ENCODE measurements at regions of chrX and their contacts with region 1.

Region 1: GRCh38 chrX:45849253-45849862 is 648.7 kb upstream of the DIPK2B start:
- DNase-seq: no peak
- H3K4me3 Mint-ChIP-seq: peak overlapping the region; percentile 94
- H3K27ac Mint-ChIP-seq: peak overlapping the region; percentile 94
- H3K4me1 Mint-ChIP-seq: peaks cover 34% of the 10 kb centered on the region
- H3K27me3 Mint-ChIP-seq: no peaks in the 10 kb centered on the region

Region 2: GRCh38 chrX:45515262-45516215 is 333.8 kb before region 1 on chrX:
- intact Hi-C with region 1: loop called (anchors 1 kb)
- DNase-seq: peak; percentile 1
- H3K4me3 Mint-ChIP-seq: no peak overlapping the region
- H3K27ac Mint-ChIP-seq: peak overlapping the region; percentile 65
- H3K4me1 Mint-ChIP-seq: peaks cover 25% of the 10 kb centered on the region
- H3K27me3 Mint-ChIP-seq: no peaks in the 10 kb centered on the region

Region 3: DNA sequence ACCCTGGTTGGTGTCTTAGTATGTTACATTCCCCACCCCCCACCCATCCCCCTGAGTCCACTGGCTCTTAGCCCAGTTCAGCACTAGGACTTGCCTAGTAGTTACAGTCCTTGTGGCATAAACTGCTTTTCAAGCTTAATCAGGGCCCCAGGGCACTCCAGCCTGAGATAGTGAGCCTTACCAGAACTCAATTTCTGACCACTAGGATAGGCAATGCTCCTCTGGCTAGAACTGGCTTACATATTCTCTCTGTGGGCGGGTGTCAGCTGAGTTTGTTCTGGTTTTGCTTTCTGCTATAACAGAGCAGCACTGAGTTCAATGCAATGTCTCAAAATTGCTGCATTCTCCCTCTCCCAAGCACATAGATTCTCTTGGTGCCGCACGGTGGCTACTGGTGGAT is 257.3 kb before region 1 on chrX:
- intact Hi-C with region 1: no loop called
- DNase-seq: no peak
- H3K4me3 Mint-ChIP-seq: no peak overlapping the region
- H3K27ac Mint-ChIP-seq: no peak overlapping the region
- H3K4me1 Mint-ChIP-seq: no peaks in the 10 kb centered on the region
- H3K27me3 Mint-ChIP-seq: peaks cover 2% of the 10 kb centered on the region

Region 4: GRCh38 chrX:45710081-45710801 is 139.1 kb before region 1 on chrX:
- intact Hi-C with region 1: loop called (anchors 2 kb)
- DNase-seq: peak; percentile 16
- H3K4me3 Mint-ChIP-seq: peak overlapping the region; percentile 11
- H3K27ac Mint-ChIP-seq: peak overlapping the region; percentile 90
- H3K4me1 Mint-ChIP-seq: peaks cover 45% of the 10 kb centered on the region
- H3K27me3 Mint-ChIP-seq: no peaks in the 10 kb centered on the region

Region 5: GRCh38 chrX:45806410-45807121 is 42.8 kb before region 1 on chrX:
- intact Hi-C with region 1: loop called (anchors 1 kb)
- DNase-seq: peak; percentile 41
- H3K4me3 Mint-ChIP-seq: peak overlapping the region; percentile 66
- H3K27ac Mint-ChIP-seq: peak overlapping the region; percentile 96
- H3K4me1 Mint-ChIP-seq: peaks cover 93% of the 10 kb centered on the region
- H3K27me3 Mint-ChIP-seq: peaks cover 3% of the 10 kb centered on the region

Region 6: GRCh38 chrX:45912316-45912715 is 63.0 kb after region 1 on chrX:
- intact Hi-C with region 1: no loop called
- DNase-seq: no peak
- H3K4me3 Mint-ChIP-seq: no peak overlapping the region
- H3K27ac Mint-ChIP-seq: no peak overlapping the region
- H3K4me1 Mint-ChIP-seq: no peaks in the 10 kb centered on the region
- H3K27me3 Mint-ChIP-seq: no peaks in the 10 kb centered on the region

Region 7: DNA sequence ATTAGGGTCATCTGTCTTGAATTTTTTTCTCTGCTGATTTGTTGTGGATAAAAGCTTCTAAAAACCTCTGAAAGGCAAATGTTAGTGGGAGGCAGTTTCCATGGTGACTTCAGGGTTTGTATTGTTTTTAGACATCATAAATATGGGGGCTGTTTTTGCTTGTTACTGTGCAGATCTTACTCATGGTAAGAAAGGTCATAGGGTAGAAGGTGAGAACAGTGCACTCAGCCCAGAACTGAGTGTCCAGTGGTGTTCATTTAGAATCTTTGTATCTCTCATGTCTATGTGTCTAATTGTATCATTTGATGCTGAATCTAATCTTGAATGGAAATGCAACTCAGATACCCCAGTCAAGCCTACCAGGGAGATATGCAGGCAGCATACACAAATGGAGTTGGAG is 86.0 kb after region 1 on chrX:
- intact Hi-C with region 1: loop called (anchors 2 kb)
- DNase-seq: no peak
- H3K4me3 Mint-ChIP-seq: no peak overlapping the region
- H3K27ac Mint-ChIP-seq: peak overlapping the region; percentile 82
- H3K4me1 Mint-ChIP-seq: peaks cover 6% of the 10 kb centered on the region
- H3K27me3 Mint-ChIP-seq: no peaks in the 10 kb centered on the region

Measured in activated T-helper 1 cell treated with anti-CD3 and anti-CD28 coated beads, Interleukin-12 subunit alpha, Interleukin-12 subunit beta, Interleukin-2, Interleukin-4 antibody, amounts not matched to agents 30 ng/mL and 10 ng/mL and 1 ng/mL, durations not matched to agents 14 hours and 24 hours and 36 hours (primary cell).